ENCODE measurements at regions of chr17 and their contacts with region 1.

Region 1: DNA sequence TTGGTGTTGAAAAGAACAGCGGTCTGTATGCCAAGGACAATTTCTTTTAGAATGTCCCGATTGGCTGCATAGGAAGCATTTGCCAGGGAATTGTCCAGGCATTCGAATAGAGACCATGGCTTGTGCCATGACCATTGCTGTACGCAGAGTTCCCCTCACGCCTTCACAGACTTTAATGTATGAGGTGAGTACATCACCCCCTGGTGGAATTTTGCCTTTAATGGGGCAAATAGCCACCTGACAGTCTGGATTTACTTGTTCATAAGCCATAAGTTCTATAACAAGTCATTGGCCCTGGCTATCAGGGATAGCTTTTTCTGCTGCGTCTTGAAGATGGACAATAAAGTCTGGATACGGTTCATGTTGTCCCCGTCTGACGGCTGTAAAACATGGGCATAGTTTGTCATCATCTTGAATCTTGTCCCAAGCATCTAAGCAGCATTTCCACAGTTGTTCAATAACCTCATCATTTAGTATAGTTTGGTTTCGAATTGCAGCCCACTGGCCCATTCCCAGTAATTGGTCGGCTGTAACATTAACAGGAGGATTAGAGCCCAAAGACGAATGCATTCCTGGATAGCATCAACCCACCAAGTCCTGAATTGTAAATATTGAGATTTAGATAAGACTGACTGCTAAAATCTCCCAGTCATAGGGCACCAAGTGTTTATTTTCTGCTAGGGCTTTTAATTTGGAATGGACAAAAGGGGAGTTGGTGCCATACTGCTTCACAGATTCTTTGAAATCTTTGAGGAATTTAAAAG is 67.7 kb upstream of the ARL4D start:
- DNase-seq: no peak
- ATAC-seq: no peak
- H3K4me3 ChIP-seq: no peak overlapping the region
- H3K27ac ChIP-seq: no peak overlapping the region
- H3K4me1 ChIP-seq: peaks cover 15% of the 10 kb centered on the region
- H3K27me3 ChIP-seq: no peaks in the 10 kb centered on the region
- CTCF ChIP-seq: no peak
- EP300 ChIP-seq: no peak
- POLR2A ChIP-seq: no peak
- RAD21 ChIP-seq: no peak

Region 2: GRCh38 chr17:43316522-43317142 is 14.4 kb before region 1 on chr17:
- CTCF ChIA-PET with region 1: interaction called, 10 read pairs
- POLR2A ChIA-PET with region 1: no interaction called
- RAD21 ChIA-PET with region 1: interaction called, 4 read pairs
- SMC1A ChIA-PET with region 1: no interaction called
- in situ Hi-C with region 1: no loop called
- intact Hi-C with region 1: no loop called
- DNase-seq: no peak
- ATAC-seq: no peak
- H3K4me3 ChIP-seq: no peak overlapping the region
- H3K27ac ChIP-seq: no peak overlapping the region
- H3K4me1 ChIP-seq: peaks cover 5% of the 10 kb centered on the region; the same call in 1 of the 2 replicates
- H3K27me3 ChIP-seq: no peaks in the 10 kb centered on the region
- CTCF ChIP-seq: no peak
- EP300 ChIP-seq: no peak
- POLR2A ChIP-seq: no peak
- RAD21 ChIP-seq: no peak

Region 3: GRCh38 chr17:43385046-43385831 is 54.2 kb after region 1 on chr17:
- CTCF ChIA-PET with region 1: no interaction called
- POLR2A ChIA-PET with region 1: no interaction called
- RAD21 ChIA-PET with region 1: no interaction called
- SMC1A ChIA-PET with region 1: no interaction called
- in situ Hi-C with region 1: no loop called
- intact Hi-C with region 1: no loop called
- DNase-seq: no peak
- ATAC-seq: no peak
- H3K4me3 ChIP-seq: no peak overlapping the region
- H3K27ac ChIP-seq: no peak overlapping the region
- H3K4me1 ChIP-seq: peaks cover 4% of the 10 kb centered on the region
- H3K27me3 ChIP-seq: no peaks in the 10 kb centered on the region
- CTCF ChIP-seq: no peak
- EP300 ChIP-seq: no peak
- POLR2A ChIP-seq: no peak
- RAD21 ChIP-seq: no peak

Region 4: GRCh38 chr17:43683928-43684653 is 353.0 kb after region 1 on chr17:
- CTCF ChIA-PET with region 1: no interaction called
- POLR2A ChIA-PET with region 1: no interaction called
- RAD21 ChIA-PET with region 1: no interaction called
- SMC1A ChIA-PET with region 1: no interaction called
- in situ Hi-C with region 1: no loop called
- intact Hi-C with region 1: no loop called
- DNase-seq: no peak
- ATAC-seq: no peak
- H3K4me3 ChIP-seq: no peak overlapping the region
- H3K27ac ChIP-seq: no peak overlapping the region
- H3K4me1 ChIP-seq: no peaks in the 10 kb centered on the region
- H3K27me3 ChIP-seq: peaks cover 0 to 5% of the 10 kb centered on the region in 2 experiments; a peak in 2 of 4 replicates
- CTCF ChIP-seq: no peak
- EP300 ChIP-seq: no peak
- POLR2A ChIP-seq: no peak
- RAD21 ChIP-seq: no peak

Measured in GM12878 (cell line).